ENCODE measurements at regions of chr11 and their contacts with region 1.

Region 1: GRCh38 chr11:12079726-12080556 is 30.4 kb upstream of the MICAL2 start:
- DNase-seq: peak; percentile 78 to 92
- H3K4me3 ChIP-seq: no peak overlapping the region
- H3K27ac ChIP-seq: peak overlapping the region; percentile 83 to 87
- H3K4me1 ChIP-seq: peaks cover 0 to 59% (median 34%) of the 10 kb centered on the region in 4 donors
- H3K27me3 ChIP-seq: no peaks in the 10 kb centered on the region
- CTCF ChIP-seq: no peak

Region 2: DNA sequence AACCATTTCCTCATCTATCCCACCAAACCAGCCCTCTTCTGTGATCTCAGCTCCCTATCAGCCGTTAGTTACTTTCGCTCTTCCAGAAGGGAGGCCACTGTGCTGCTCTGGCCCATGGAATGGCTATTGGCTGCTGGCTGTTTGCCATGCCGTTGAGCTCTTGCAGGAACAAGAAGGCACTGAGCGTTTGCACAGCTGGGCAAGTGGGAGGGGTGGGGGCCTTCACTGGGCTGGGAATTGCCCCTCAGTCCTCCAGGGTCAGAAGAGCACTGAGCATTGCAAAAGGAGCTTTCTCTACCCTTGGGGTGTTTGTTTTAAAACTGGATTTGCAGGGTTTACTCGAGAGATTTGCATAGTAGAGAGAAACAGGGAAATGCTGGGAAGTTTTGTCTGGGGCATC is 168.4 kb after region 1 on chr11:
- intact Hi-C with region 1: no loop called
- DNase-seq: peak; percentile 70 to 83
- H3K4me3 ChIP-seq: no peak overlapping the region
- H3K27ac ChIP-seq: peak overlapping the region; percentile 68 to 77
- H3K4me1 ChIP-seq: peaks cover 0 to 57% (median 40%) of the 10 kb centered on the region in 4 donors
- H3K27me3 ChIP-seq: no peaks in the 10 kb centered on the region
- CTCF ChIP-seq: no peak

Region 3: DNA sequence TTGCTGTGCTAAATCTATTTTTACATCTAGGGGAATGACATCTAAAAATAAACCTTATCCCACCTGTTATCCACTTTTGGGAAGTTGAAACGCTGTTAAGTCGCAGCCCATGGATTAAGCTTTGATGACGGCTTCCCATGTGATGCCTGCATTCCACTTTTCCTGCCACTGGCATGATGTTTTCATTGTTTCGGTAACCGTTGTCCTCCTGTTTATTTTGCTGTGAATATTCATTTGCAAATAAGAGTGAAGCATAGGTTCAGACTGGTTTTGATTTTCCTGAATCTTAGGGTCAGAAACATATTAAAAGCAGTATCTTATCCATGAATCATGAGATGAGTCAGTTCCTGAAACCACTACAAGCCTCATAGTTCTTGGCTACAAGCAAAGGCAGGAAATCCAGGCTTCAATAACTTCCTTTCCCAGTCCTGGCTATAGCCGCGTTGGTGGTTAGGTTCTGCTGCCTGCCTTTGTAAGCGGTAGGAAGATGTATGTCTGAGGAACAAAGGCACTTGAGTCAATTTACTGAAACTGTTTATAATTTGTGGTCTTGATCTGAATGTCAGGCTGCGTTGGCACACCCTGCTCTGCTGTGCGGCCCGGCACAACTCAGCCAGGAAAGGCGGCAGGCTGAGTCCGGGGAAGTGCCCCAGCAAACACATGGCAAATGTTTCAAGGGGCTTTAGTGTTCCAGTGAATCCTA is 613.7 kb after region 1 on chr11:
- intact Hi-C with region 1: loop called (anchors 10 kb)
- DNase-seq: peak; percentile 64 to 71
- H3K4me3 ChIP-seq: peak overlapping the region; percentile 31 to 40
- H3K27ac ChIP-seq: peak overlapping the region; percentile 86 to 91
- H3K4me1 ChIP-seq: peaks cover 11 to 54% (median 42%) of the 10 kb centered on the region in 4 donors
- H3K27me3 ChIP-seq: no peaks in the 10 kb centered on the region
- CTCF ChIP-seq: no peak

Measured in tibial artery (tissue), 4 donors.